Activated B cell treated with CpG ODN at 0.5 μM for 24 hours (primary cell): ENCODE measurements at regions of chr6 and their contacts with region 1.

Region 1: GRCh38 chr6:85593438-85594196 is at the start of gene SNX14:
- DNase-seq: peak; percentile 82
- ATAC-seq: peak; percentile 87
- H3K4me3 Mint-ChIP-seq: peak within 1 kb of the TSS; percentile 99
- H3K27ac Mint-ChIP-seq: peak within 1 kb of the TSS; percentile 98
- H3K4me1 Mint-ChIP-seq: peaks cover 47% of the 10 kb centered on the region
- H3K27me3 Mint-ChIP-seq: no peaks in the 10 kb centered on the region
- CTCF ChIP-seq: no peak
- total RNA-seq, gene SNX14: 61.6 and 70.8 TPM in 2 replicates

Region 2: DNA sequence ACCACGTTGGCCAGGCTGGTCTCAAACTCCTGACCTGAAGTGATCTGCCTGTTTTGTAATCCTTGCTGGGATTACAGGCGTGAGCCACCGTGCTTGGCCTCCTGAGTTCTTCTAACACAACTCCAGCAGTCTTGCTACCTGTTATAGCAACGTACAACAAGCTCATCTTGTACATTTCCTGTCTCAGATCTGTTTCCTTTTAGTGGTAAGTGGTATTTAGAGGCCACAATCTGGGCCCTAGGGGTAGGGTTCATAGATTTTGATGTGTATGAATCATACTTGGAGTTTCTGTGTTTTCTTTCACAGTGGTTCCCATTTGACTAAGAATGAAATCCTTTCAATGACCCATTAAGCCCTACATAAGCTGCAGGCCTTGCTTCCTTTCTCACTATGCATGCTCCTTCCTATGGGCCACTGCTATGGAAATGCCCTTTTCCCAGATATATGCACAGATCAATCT is 76.1 kb after region 1 on chr6:
- CTCF ChIA-PET with region 1: no interaction called
- POLR2A ChIA-PET with region 1: interaction called, 17 read pairs
- intact Hi-C with region 1: loop called (anchors 2 kb)
- DNase-seq: no peak
- ATAC-seq: peak; percentile 97
- H3K4me3 Mint-ChIP-seq: peak overlapping the region; percentile 75
- H3K27ac Mint-ChIP-seq: peak overlapping the region; percentile 95
- H3K4me1 Mint-ChIP-seq: peaks cover 50% of the 10 kb centered on the region
- H3K27me3 Mint-ChIP-seq: no peaks in the 10 kb centered on the region
- CTCF ChIP-seq: no peak

Region 3: DNA sequence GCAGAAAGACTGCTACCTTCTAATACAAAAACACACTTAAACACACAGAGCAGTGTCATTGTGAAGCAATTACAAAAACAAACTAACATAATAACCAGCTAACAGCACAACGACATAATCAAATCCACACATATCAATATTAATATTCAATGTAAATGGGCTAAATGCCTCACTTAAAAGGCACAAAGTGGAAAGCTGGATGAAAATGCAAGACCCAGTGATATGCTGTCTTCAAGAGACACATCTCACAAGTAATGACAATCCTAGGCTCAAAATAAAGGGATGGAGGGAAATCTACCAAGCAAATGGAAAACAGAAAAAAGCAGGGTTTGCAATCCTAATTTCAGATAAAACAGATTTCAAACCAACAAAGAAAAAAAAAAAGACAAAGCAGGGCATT is 1275.9 kb after region 1 on chr6:
- CTCF ChIA-PET with region 1: no interaction called
- POLR2A ChIA-PET with region 1: no interaction called
- intact Hi-C with region 1: no loop called
- DNase-seq: no peak
- ATAC-seq: no peak
- H3K4me3 Mint-ChIP-seq: no peak overlapping the region
- H3K27ac Mint-ChIP-seq: no peak overlapping the region
- H3K4me1 Mint-ChIP-seq: no peaks in the 10 kb centered on the region
- H3K27me3 Mint-ChIP-seq: no peaks in the 10 kb centered on the region
- CTCF ChIP-seq: no peak